CD8-positive, alpha-beta T cell (primary cell): ENCODE measurements at regions of chr20 and their contacts with region 1.

Region 1: DNA sequence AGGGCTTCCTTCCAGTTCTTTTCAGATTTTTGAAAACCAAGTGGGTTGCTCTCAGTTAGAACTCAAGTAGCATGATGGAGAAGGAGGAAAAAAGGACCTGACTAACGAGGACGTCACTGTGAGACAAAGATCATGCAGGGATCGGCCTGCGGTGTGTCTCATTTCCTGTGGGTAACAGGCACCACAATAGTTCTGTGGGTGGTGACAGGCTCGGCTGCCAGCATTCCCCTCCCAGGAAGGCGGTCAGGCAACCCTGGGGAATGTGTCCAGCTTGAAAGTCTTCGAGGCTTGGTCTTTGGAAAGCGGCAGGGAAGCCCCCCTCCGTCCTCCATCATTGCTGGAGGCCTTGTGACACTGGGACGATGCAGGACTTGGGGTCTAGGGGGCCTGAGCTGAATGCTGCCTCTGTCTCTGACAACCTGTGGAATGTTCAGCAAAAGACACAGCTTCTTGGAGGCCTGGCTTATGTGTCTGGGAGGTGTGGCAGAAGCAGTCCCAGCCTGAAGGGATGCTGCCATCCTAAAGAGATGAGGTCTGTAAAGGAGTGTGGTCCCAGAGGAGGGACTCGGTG is 121.0 kb downstream of the BCAS1 start:
- DNase-seq: peak; percentile 55 to 94 (median 80)
- ATAC-seq: peak; percentile 88
- H3K4me3 ChIP-seq: peak overlapping the region; percentile 4 to 10
- H3K4me3 Mint-ChIP-seq: peak overlapping the region; percentile 76
- H3K27ac ChIP-seq: peak overlapping the region; percentile 68 to 70
- H3K27ac Mint-ChIP-seq: peak overlapping the region; percentile 98
- H3K4me1 ChIP-seq: peaks cover 26% of the 10 kb centered on the region
- H3K4me1 Mint-ChIP-seq: peaks cover 36% of the 10 kb centered on the region
- H3K27me3 ChIP-seq: no peaks in the 10 kb centered on the region
- H3K27me3 Mint-ChIP-seq: no peaks in the 10 kb centered on the region
- CTCF ChIP-seq: no peak

Region 2: DNA sequence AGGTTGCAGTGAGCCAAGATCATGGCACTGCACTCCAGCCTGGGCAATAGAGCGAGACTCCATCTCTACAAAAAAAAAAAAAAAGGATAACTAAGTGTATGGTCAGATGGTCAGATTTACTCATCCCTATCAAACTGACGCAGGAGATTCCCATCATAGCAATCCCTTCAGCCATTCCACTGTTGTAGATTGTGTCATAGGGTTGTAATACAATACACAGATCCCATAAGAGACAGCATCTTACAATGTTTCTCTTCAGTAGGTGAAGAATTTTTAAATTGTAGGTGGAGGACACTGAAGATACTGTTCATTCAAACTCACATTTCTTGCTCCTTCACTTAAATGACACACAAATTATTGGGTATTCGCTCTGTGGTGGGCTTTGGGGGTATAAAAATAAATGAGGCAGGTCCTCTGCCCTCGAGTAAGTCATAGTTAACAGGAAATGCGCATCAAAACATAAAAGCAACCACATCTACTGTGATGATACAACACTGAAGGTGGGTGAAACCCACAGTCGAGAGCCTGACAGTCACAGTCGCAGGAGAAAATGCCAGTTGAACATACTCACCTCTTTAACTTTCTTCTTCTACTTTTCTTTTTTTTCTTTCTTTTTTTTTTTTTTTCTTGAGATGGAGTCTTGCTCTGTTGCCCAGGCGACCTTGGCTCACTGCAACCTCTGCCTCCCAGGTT is 561.3 kb before region 1 on chr20:
- CTCF ChIA-PET with region 1: no interaction called
- POLR2A ChIA-PET with region 1: no interaction called
- intact Hi-C with region 1: loop called (anchors 1 to 10 kb)
- DNase-seq: peak in 6 of 9 experiments; percentile 16 to 85 (median 58)
- ATAC-seq: peak; percentile 94
- H3K4me3 ChIP-seq: no peak overlapping the region
- H3K4me3 Mint-ChIP-seq: peak overlapping the region; percentile 20
- H3K27ac ChIP-seq: no peak overlapping the region
- H3K27ac Mint-ChIP-seq: peak overlapping the region; percentile 58
- H3K4me1 ChIP-seq: peaks cover 27% of the 10 kb centered on the region
- H3K4me1 Mint-ChIP-seq: peaks cover 42% of the 10 kb centered on the region
- H3K27me3 ChIP-seq: peaks cover 0 to 2% of the 10 kb centered on the region in 2 experiments
- H3K27me3 Mint-ChIP-seq: no peaks in the 10 kb centered on the region
- CTCF ChIP-seq: no peak

Region 3: DNA sequence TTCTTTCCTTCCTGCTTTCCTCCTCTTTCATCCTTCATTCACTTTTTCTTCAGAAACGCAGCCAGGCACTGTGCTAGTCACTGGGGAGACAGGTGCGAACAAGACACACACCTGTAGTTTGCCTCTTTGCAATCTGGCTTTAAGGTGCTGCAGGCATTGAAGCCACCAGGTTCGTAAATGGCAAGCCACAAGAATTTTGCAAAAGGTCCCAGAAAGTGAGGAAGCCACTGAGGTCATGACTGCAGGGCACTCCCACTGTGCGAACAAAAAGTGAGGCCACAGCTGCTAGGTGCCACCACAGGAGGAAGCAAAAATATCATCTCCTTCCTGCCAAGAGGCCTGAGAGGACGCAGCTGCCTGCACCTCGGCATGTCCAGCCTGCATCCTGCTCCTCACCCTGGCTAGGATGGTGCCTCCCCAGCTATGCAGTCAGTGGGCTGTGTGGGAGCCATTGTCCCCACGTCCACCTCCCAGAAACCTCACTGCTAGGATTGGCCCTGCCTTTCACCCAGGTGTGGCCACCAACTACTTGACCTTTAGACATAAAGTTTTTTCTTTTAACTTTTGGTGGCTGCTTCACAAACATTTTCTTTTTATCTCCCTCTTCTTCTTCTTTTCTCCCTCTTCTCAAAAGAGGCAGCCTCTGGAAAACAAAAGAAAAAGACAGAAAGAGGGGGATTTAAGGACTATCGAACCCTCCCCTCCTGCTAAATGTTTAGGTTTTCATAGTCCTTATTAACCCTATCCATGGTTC is 109.8 kb before region 1 on chr20:
- CTCF ChIA-PET with region 1: no interaction called
- POLR2A ChIA-PET with region 1: no interaction called
- intact Hi-C with region 1: loop called in 1 of 2 experiments (anchors 2 kb)
- DNase-seq: peak; percentile 52 to 92 (median 72)
- ATAC-seq: peak; percentile 57
- H3K4me3 ChIP-seq: no peak overlapping the region
- H3K4me3 Mint-ChIP-seq: peak overlapping the region; percentile 54
- H3K27ac ChIP-seq: peak overlapping the region; percentile 48 to 73
- H3K27ac Mint-ChIP-seq: peak overlapping the region; percentile 97
- H3K4me1 ChIP-seq: peaks cover 79% of the 10 kb centered on the region
- H3K4me1 Mint-ChIP-seq: peaks cover 81% of the 10 kb centered on the region
- H3K27me3 ChIP-seq: no peaks in the 10 kb centered on the region
- H3K27me3 Mint-ChIP-seq: no peaks in the 10 kb centered on the region
- CTCF ChIP-seq: no peak

Region 4: GRCh38 chr20:54062812-54063280 is 113.4 kb after region 1 on chr20:
- CTCF ChIA-PET with region 1: interaction called, 4 read pairs
- POLR2A ChIA-PET with region 1: no interaction called
- intact Hi-C with region 1: loop called in 1 of 2 experiments (anchors 5 kb)
- DNase-seq: peak in 2 of 9 experiments; percentile 40 to 60
- ATAC-seq: no peak
- H3K4me3 ChIP-seq: no peak overlapping the region
- H3K4me3 Mint-ChIP-seq: no peak overlapping the region
- H3K27ac ChIP-seq: no peak overlapping the region
- H3K27ac Mint-ChIP-seq: no peak overlapping the region
- H3K4me1 ChIP-seq: peaks cover 24% of the 10 kb centered on the region
- H3K4me1 Mint-ChIP-seq: no peaks in the 10 kb centered on the region
- H3K27me3 ChIP-seq: no peaks in the 10 kb centered on the region
- H3K27me3 Mint-ChIP-seq: no peaks in the 10 kb centered on the region
- CTCF ChIP-seq: peak; percentile 53